ENCODE measurements at regions of chr7 and their contacts with region 1.

Region 1: DNA sequence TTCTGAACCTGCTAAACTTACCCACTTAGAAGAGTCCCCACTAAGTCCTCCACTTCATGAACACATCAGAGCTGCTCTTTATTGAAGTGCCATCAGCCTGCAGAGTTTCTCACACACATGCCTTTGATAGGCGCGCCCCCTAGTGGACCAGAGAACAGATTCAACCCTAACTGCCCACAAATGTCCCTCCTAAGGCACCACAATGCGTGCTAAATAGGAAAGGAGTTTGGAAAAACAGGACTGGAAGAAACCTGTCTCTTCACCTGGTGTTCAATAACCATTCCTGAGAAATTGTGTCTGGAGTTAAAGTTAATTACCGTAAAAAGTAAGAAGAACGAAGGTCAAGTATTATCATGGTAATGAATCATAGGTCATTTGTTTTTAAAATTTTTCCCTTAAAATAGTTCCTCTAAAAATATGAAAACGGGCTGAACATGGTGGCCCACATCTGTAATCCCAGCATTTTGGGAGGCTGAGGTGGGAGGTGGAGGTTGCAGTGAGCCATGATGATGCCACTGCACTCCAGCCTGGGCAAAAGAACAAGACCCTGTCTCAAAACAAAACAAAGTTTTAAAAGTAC is 249.7 kb downstream of the ELMO1 start:
- DNase-seq: peak; percentile 53
- H3K4me3 Mint-ChIP-seq: no peak overlapping the region
- H3K27ac Mint-ChIP-seq: no peak overlapping the region
- H3K4me1 Mint-ChIP-seq: no peaks in the 10 kb centered on the region
- H3K27me3 Mint-ChIP-seq: no peaks in the 10 kb centered on the region

Region 2: GRCh38 chr7:36440880-36441279 is 758.1 kb before region 1 on chr7:
- intact Hi-C with region 1: loop called (anchors 1 kb)
- DNase-seq: no peak
- H3K4me3 Mint-ChIP-seq: no peak overlapping the region
- H3K27ac Mint-ChIP-seq: no peak overlapping the region
- H3K4me1 Mint-ChIP-seq: no peaks in the 10 kb centered on the region
- H3K27me3 Mint-ChIP-seq: no peaks in the 10 kb centered on the region

Region 3: DNA sequence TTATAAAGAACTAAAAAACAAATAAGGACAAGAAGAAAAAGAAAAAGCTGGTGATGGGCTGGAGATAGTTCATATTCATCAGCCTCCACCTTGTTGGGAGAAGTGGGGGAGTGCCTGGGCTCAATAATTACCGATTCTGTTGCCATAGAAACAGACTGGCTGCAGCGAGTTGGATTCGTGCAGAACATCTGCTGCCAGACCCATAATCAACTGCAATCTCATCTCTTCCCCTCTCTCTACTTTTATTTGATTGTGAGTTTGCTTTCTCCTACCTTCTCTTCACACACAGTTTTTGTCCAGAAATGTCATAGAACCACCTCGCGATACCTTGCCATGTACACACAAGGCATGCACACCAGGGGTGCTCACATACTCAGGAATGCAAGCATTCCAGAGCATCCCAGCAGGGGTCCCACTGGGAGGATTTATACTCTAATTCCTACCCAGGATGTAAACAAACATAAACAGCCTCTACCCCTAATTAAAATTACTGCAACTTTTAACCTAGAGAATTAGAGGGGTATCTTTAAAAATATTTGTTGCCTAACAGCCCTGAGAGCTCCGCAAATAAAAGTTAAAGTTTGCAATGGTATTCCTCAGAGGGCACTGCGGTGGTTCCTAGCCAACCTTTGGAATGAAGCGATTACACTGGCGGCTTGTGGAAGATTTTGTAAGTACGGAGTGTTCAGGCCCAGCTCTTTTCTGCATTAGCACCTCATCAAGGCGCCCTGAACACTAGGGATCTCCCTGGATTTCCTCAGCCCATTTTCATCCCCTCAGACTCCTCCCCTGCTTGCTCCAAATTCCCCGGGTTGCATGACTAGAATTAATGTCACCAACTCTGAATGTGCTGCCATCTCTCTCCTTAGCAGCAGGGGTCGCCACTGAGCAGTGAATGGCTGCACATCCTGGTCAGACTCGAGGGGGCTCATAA is 212.3 kb before region 1 on chr7:
- intact Hi-C with region 1: loop called (anchors 1 kb)
- DNase-seq: peak; percentile 40
- H3K4me3 Mint-ChIP-seq: no peak overlapping the region
- H3K27ac Mint-ChIP-seq: no peak overlapping the region
- H3K4me1 Mint-ChIP-seq: peaks cover 36% of the 10 kb centered on the region
- H3K27me3 Mint-ChIP-seq: no peaks in the 10 kb centered on the region

Measured in activated T-helper 1 cell treated with anti-CD3 and anti-CD28 coated beads, Interleukin-12 subunit alpha, Interleukin-12 subunit beta, Interleukin-2, Interleukin-4 antibody, amounts not matched to agents 30 ng/mL and 10 ng/mL and 1 ng/mL, durations not matched to agents 14 hours and 24 hours and 36 hours (primary cell).